ENCODE measurements at regions of chr10 and their contacts with region 1.

Region 1: GRCh38 chr10:48981310-48981907 is 41.8 kb upstream of the LRRC18 start:
- DNase-seq: peak; percentile 51 to 73 (median 65)
- H3K4me3 ChIP-seq: no peak overlapping the region
- H3K27ac ChIP-seq: no peak overlapping the region
- H3K4me1 ChIP-seq: peaks cover 6% of the 10 kb centered on the region
- H3K27me3 ChIP-seq: no peaks in the 10 kb centered on the region
- CTCF ChIP-seq: peak; percentile 64 to 74 (median 74)
- EP300 ChIP-seq: no peak
- POLR2A ChIP-seq: no peak

Region 2: DNA sequence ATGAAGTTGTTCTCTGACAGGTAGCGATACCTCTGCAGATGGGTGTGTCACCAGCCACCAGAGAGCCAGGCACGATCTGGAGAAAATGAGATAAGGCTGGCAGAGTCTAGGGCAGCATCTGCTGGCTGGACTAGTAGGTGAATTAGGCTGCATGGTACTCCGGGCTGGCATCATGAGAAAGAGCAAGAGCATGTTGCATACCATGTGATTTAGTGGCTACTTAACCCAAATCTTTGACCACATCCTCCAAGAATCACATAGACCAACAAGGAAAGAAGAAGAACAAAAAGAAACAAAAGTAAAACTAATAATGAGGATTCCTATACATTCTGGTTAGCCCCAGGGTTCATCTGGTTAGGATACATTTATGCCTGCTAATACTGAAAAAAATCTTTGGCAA is 175.8 kb after region 1 on chr10:
- intact Hi-C with region 1: loop called in 3 of 4 experiments (anchors 5 kb)
- DNase-seq: no peak
- H3K4me3 ChIP-seq: no peak overlapping the region
- H3K27ac ChIP-seq: no peak overlapping the region
- H3K4me1 ChIP-seq: no peaks in the 10 kb centered on the region
- H3K27me3 ChIP-seq: no peaks in the 10 kb centered on the region
- CTCF ChIP-seq: no peak
- EP300 ChIP-seq: no peak
- POLR2A ChIP-seq: no peak

Region 3: GRCh38 chr10:49164559-49165188 is 183.3 kb after region 1 on chr10:
- intact Hi-C with region 1: loop called in 3 of 4 experiments (anchors 5 kb)
- DNase-seq: peak in 4 of 5 donors; percentile 35 to 55 (median 42)
- H3K4me3 ChIP-seq: no peak overlapping the region
- H3K27ac ChIP-seq: no peak overlapping the region
- H3K4me1 ChIP-seq: no peaks in the 10 kb centered on the region
- H3K27me3 ChIP-seq: no peaks in the 10 kb centered on the region
- CTCF ChIP-seq: peak in 2 of 3 donors; percentile 34 to 45
- EP300 ChIP-seq: no peak
- POLR2A ChIP-seq: no peak

Region 4: DNA sequence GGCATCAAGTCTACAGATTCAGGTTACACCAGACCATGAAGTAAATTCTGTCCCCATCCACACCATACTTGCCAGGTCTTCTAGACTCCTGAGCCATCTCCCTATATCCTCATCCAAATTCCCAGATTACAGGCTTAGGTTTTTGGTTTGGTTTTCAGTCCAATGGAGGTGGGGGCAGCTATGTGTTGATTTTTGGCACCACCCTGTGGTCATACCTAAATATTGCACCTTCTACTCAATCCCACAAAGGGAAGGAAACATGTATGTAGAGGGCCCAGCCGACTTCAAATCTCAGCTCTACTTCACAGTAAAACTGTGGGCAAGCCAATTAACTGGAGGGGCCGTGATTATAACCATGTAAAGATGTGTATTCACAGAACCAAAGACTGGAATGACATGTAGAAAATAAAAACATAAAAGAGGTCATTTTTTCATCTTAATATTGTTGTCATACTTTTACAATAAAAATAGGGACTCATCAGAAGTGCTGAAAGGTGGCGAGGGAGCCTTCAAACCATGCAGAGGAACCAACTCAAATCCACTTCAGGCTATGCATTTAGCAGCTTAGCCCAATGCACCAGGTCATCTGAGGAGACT is 537.7 kb after region 1 on chr10:
- intact Hi-C with region 1: loop called in 2 of 4 experiments (anchors 10 kb)
- DNase-seq: peak in 1 of 5 donors; percentile 25
- H3K4me3 ChIP-seq: no peak overlapping the region
- H3K27ac ChIP-seq: no peak overlapping the region
- H3K4me1 ChIP-seq: no peaks in the 10 kb centered on the region
- H3K27me3 ChIP-seq: no peaks in the 10 kb centered on the region
- CTCF ChIP-seq: peak in 1 of 3 donors; percentile 35
- EP300 ChIP-seq: no peak
- POLR2A ChIP-seq: no peak